Ovary (tissue), 10 donors: ENCODE measurements at regions of chr7 and their contacts with region 1.

Region 1: GRCh38 chr7:116809636-116810266 is 52.6 kb upstream of the CAPZA2 start:
- DNase-seq: no peak
- H3K4me3 ChIP-seq: no peak overlapping the region
- H3K27ac ChIP-seq: no peak overlapping the region
- H3K4me1 ChIP-seq: no peaks in the 10 kb centered on the region
- H3K27me3 ChIP-seq: no peaks in the 10 kb centered on the region
- CTCF ChIP-seq: peak; percentile 40 to 45 (median 41)
- EP300 ChIP-seq: no peak
- POLR2A ChIP-seq: no peak

Region 2: DNA sequence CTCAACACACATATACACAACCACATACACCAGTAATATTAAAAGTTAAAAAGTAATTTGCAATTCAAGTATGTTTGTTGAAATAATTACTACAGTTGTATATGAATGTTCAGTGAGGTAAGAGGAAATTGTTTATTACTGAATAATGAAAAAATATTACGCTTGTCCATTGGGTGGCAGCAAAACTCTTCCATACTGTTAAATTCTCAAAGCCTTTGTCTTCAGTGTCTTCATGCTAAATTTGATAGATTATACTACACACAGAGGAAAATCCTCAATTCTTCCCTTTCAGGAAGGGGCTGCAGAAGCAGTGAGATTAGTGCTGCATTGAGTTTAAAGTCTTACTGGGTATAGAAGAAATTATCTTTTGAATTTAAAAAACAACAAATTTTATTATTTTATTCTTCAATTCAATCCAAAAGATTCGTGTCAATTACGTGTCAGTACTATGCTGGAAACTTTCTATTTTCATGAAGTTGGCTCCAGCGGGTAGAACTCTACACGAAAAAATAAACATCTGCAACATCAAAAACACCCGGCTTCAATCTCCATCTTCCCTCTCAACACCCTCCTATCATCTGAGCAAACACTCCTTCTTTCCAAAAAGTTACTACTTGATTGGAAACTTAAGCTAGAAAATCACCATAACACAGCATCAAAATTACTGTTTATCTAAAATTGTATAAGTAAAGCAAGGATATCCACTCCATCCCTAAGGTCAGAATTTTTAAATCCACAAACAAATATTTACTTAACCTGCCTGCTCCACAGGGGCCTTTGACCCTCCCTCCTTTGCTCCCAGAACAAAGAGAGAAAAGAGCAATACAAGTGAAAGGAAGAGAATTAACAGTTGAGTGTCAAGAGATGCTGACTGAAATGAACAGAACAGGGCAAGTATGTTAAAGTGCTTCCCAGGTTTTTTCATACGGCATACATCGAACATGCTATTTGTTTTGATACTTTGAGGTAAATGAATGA is 636.4 kb before region 1 on chr7:
- intact Hi-C with region 1: loop called in 3 of 4 experiments (anchors 10 kb)
- DNase-seq: no peak
- H3K4me3 ChIP-seq: no peak overlapping the region
- H3K27ac ChIP-seq: no peak overlapping the region
- H3K4me1 ChIP-seq: no peaks in the 10 kb centered on the region
- H3K27me3 ChIP-seq: no peaks in the 10 kb centered on the region
- CTCF ChIP-seq: peak in 1 of 3 donors; percentile 53
- EP300 ChIP-seq: no peak
- POLR2A ChIP-seq: no peak

Region 3: DNA sequence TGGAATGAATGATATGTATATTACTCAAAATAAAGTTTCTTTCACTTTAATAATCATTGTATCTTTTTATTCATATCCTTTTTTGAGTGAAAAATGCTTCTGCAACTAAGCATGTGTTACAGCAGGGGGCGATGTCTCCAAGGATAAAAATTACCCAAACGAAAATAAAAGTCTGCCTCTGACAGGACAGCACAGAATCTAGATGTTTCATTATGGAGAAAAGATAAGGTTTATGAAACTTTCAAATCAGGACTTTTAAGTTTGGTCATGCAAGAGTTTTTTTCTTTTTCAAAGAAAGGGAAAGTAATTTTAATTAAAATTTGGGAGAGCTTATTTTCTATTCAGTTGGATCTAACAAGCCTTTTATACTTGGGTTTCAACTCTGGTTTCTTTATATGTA is 551.0 kb before region 1 on chr7:
- intact Hi-C with region 1: loop called in 3 of 4 experiments (anchors 5 to 10 kb)
- DNase-seq: peak in 2 of 5 donors; percentile 19 to 44
- H3K4me3 ChIP-seq: no peak overlapping the region
- H3K27ac ChIP-seq: no peak overlapping the region
- H3K4me1 ChIP-seq: no peaks in the 10 kb centered on the region
- H3K27me3 ChIP-seq: no peaks in the 10 kb centered on the region
- CTCF ChIP-seq: peak; percentile 76 to 96 (median 93)
- EP300 ChIP-seq: no peak
- POLR2A ChIP-seq: no peak

Region 4: GRCh38 chr7:116588641-116589594 is 220.8 kb before region 1 on chr7:
- intact Hi-C with region 1: loop called in 3 of 4 experiments (anchors 5 to 10 kb)
- DNase-seq: no peak
- H3K4me3 ChIP-seq: no peak overlapping the region
- H3K27ac ChIP-seq: no peak overlapping the region
- H3K4me1 ChIP-seq: peaks cover 4% of the 10 kb centered on the region
- H3K27me3 ChIP-seq: no peaks in the 10 kb centered on the region
- CTCF ChIP-seq: peak; percentile 60 to 82 (median 70)
- EP300 ChIP-seq: no peak
- POLR2A ChIP-seq: no peak

Region 5: GRCh38 chr7:116598278-116598677 is 211.5 kb before region 1 on chr7:
- intact Hi-C with region 1: loop called (anchors 5 to 10 kb)
- DNase-seq: no peak
- H3K4me3 ChIP-seq: no peak overlapping the region
- H3K27ac ChIP-seq: no peak overlapping the region
- H3K4me1 ChIP-seq: no peaks in the 10 kb centered on the region
- H3K27me3 ChIP-seq: no peaks in the 10 kb centered on the region
- CTCF ChIP-seq: no peak
- EP300 ChIP-seq: no peak
- POLR2A ChIP-seq: no peak

Region 6: DNA sequence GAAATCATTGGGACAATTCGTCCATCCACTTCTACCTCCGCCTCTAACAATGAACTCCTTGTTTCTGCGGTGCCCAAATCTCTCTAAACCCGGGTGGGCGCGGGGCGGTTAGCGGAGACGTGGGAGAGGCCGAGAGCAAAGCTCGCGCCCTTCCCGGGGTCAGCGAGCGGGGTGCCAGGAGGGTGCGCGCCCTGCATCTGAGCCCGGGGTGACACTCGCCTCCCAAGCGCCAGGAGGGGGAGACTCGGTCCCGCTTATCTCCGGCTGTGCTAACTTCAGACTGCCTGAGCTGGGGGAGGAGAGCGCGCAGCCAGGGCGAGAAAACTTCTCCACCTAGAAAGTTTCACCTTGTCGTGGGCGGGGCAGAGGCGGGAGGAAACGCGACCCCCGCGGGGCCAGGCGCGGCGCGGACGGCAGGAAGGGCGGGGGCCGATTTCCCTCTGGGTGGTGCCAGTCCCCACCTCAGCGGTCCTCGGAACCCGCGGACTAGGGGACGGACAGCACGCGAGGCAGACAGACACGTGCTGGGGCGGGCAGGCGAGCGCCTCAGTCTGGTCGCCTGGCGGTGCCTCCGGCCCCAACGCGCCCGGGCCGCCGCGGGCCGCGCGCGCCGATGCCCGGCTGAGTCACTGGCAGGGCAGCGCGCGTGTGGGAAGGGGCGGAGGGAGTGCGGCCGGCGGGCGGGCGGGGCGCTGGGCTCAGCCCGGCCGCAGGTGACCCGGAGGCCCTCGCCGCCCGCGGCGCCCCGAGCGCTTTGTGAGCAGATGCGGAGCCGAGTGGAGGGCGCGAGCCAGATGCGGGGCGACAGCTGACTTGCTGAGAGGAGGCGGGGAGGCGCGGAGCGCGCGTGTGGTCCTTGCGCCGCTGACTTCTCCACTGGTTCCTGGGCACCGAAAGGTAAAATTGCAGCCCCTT is 137.8 kb before region 1 on chr7 and contains the start of gene MET:
- intact Hi-C with region 1: no loop called
- DNase-seq: peak; percentile 25 to 62 (median 30)
- H3K4me3 ChIP-seq: peak within 1 kb of the TSS; percentile 41
- H3K27ac ChIP-seq: no peak within 1 kb of the TSS
- H3K4me1 ChIP-seq: peaks cover 1% of the 10 kb centered on the region
- H3K27me3 ChIP-seq: no peaks in the 10 kb centered on the region
- CTCF ChIP-seq: peak in 1 of 3 donors; percentile 11
- EP300 ChIP-seq: no peak
- POLR2A ChIP-seq: no peak
- total RNA-seq, gene MET: 2.8 to 33.9 (median 5.8) TPM